Activated naive CD4-positive, alpha-beta T cell treated with anti-CD3 and anti-CD28 coated beads, Interleukin-2, amount 10 ng/mL, durations not matched to agents 7 days and 5 days (primary cell): ENCODE measurements at regions of chr15 and their contacts with region 1.

Region 1: GRCh38 chr15:52227456-52227855 is 36.3 kb upstream of the GNB5 start:
- DNase-seq: peak; percentile 82
- H3K4me3 Mint-ChIP-seq: no peak overlapping the region
- H3K27ac Mint-ChIP-seq: no peak overlapping the region
- H3K4me1 Mint-ChIP-seq: peaks cover 30% of the 10 kb centered on the region
- H3K27me3 Mint-ChIP-seq: no peaks in the 10 kb centered on the region

Region 2: DNA sequence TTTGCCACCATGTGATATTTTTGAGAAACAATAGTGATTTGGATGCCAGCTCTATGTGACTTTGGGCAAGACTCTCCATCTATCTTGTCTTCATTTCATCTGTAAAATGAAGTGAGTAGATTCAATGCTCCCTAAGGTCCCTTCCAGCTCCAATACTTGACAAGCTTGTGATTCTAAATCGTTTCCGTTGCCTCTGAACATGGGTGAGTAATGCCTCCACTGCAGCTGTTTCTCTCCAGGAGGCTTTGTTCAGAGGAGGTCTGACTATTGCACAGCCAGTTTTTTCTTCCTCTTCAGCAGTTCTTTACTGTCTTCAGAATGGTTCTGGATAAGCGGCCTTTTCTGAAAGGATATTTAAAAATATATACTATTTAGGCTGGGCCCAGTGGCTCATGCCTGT is 412.9 kb before region 1 on chr15:
- CTCF ChIA-PET with region 1: no interaction called
- DNase-seq: no peak
- H3K4me3 Mint-ChIP-seq: no peak overlapping the region
- H3K27ac Mint-ChIP-seq: no peak overlapping the region
- H3K4me1 Mint-ChIP-seq: no peaks in the 10 kb centered on the region
- H3K27me3 Mint-ChIP-seq: no peaks in the 10 kb centered on the region

Region 3: GRCh38 chr15:52031566-52031965 is 195.9 kb before region 1 on chr15:
- CTCF ChIA-PET with region 1: no interaction called
- DNase-seq: no peak
- H3K4me3 Mint-ChIP-seq: no peak overlapping the region
- H3K27ac Mint-ChIP-seq: no peak overlapping the region
- H3K4me1 Mint-ChIP-seq: peaks cover 3% of the 10 kb centered on the region
- H3K27me3 Mint-ChIP-seq: no peaks in the 10 kb centered on the region

Region 4: GRCh38 chr15:52179278-52180195 is 47.9 kb before region 1 on chr15:
- CTCF ChIA-PET with region 1: interaction called, 22 read pairs
- DNase-seq: peak; percentile 94
- H3K4me3 Mint-ChIP-seq: peak overlapping the region; percentile 94
- H3K27ac Mint-ChIP-seq: peak overlapping the region; percentile 98
- H3K4me1 Mint-ChIP-seq: peaks cover 39% of the 10 kb centered on the region
- H3K27me3 Mint-ChIP-seq: no peaks in the 10 kb centered on the region

Region 5: GRCh38 chr15:52217186-52217585 is 10.3 kb before region 1 on chr15:
- CTCF ChIA-PET with region 1: interaction called, 35 read pairs
- DNase-seq: peak; percentile 51
- H3K4me3 Mint-ChIP-seq: no peak overlapping the region
- H3K27ac Mint-ChIP-seq: no peak overlapping the region
- H3K4me1 Mint-ChIP-seq: peaks cover 28% of the 10 kb centered on the region
- H3K27me3 Mint-ChIP-seq: peaks cover 5% of the 10 kb centered on the region